HEK293 (cell line): ENCODE measurements at regions of chr1 and their contacts with region 1.

Region 1: DNA sequence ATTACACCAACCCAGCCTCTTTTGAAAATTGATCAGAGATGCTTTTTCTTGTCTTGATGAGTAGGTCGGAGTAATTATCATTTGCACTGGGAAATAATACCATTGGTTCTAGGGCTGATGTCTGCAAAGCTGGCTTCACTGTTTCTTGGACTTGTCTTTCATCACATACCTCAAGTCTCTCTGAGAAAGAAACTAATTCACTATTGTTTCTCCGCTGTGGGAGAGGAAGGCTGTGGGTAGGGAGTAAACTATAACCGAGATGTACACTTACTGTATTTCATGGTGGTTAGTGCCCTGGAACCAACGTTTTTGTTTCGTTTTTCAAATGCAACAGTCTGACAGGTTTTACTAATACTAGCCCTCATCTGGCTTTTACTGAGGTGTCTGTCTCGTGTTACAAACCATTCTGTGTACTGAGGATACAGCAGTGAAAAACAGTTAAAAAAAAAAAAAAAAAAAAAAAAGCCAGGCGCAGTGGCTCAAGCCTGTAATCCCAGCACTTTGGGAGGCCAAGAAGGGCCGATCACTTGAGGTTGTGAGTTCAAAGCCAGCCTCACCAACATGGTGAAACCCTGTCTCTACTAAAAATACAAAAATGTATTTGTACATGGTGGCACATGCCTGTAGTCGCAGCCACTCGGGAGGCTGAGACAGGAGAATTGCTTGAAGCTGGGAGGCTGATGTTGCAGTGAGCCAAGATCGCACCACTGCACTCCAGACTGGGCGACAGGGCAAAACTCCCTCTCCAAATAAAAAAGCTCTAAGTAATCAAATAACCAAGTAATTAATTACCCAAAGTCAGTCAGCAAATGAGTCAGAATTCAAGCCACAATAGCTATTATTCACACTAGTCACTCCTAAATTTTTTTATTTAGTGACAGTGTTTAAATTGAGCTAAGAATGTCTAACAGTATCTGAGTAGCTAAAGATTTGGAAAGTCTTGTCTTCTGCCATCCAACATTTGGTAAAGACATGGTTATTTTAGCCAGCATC is 23.3 kb downstream of the TOMM20 start:
- H3K4me3 ChIP-seq: no peak overlapping the region
- H3K27ac ChIP-seq: no peak overlapping the region
- H3K4me1 ChIP-seq: no peaks in the 10 kb centered on the region
- CTCF ChIP-seq: no peak

Region 2: GRCh38 chr1:235093696-235094592 is 11.4 kb before region 1 on chr1:
- CTCF ChIA-PET with region 1: interaction called, 42 read pairs
- POLR2A ChIA-PET with region 1: interaction called, 8 read pairs
- H3K4me3 ChIP-seq: no peak overlapping the region
- H3K27ac ChIP-seq: no peak overlapping the region
- H3K4me1 ChIP-seq: no peaks in the 10 kb centered on the region
- CTCF ChIP-seq: peak; percentile 96

Region 3: DNA sequence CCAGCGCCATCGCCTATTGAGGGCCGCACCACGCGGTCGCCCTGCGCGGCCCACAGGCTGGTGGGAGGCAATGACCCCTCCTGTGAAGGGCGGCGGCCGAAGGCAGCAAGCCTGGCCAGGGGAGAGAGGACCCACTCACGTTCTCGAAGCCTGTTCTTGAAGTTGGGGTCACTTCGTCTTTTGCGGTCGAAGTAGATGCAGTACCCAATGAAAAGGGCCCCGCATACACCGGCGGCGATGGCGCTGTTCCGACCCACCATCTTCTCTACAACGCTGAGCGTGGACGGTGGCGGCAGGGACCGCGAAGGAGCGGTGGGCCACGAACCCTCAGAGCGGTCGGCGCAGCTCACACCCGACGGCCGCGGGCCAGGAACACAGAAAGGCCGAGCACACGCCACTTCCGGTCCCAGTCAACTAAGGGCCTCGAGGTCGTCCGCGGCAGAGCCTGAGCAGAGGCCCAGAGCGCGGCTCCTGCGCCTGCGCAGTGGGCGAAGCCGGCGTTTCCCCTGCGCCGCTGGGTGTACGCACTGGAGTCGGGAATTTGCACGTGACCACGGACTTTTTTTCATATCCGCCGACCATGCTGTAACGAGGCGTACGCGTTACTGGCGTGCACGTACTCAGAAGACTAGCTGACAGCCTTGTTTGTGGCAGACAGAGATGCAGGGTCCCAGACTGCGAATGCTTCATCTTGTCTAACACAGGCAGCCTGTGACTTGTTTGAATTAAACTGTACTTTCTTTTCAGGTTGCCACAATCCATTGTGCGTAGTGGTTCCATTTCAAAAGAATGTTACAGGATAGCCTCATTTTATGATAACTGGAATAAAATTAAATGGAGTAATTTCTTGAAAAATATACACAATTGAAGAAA is 23.3 kb after region 1 on chr1 and contains the start of gene TOMM20:
- CTCF ChIA-PET with region 1: interaction called, 13 read pairs
- POLR2A ChIA-PET with region 1: interaction called, 10 read pairs
- H3K4me3 ChIP-seq: peak within 1 kb of the TSS; percentile 59
- H3K27ac ChIP-seq: peak within 1 kb of the TSS; percentile 91
- H3K4me1 ChIP-seq: peaks cover 2% of the 10 kb centered on the region; the same call in 1 of the 2 replicates
- CTCF ChIP-seq: peak; percentile 86